Activated CD8-positive, alpha-beta T cell treated with anti-CD3 and anti-CD28 coated beads for 36 hours (primary cell): ENCODE measurements at regions of chr11 and their contacts with region 1.

Region 1: DNA sequence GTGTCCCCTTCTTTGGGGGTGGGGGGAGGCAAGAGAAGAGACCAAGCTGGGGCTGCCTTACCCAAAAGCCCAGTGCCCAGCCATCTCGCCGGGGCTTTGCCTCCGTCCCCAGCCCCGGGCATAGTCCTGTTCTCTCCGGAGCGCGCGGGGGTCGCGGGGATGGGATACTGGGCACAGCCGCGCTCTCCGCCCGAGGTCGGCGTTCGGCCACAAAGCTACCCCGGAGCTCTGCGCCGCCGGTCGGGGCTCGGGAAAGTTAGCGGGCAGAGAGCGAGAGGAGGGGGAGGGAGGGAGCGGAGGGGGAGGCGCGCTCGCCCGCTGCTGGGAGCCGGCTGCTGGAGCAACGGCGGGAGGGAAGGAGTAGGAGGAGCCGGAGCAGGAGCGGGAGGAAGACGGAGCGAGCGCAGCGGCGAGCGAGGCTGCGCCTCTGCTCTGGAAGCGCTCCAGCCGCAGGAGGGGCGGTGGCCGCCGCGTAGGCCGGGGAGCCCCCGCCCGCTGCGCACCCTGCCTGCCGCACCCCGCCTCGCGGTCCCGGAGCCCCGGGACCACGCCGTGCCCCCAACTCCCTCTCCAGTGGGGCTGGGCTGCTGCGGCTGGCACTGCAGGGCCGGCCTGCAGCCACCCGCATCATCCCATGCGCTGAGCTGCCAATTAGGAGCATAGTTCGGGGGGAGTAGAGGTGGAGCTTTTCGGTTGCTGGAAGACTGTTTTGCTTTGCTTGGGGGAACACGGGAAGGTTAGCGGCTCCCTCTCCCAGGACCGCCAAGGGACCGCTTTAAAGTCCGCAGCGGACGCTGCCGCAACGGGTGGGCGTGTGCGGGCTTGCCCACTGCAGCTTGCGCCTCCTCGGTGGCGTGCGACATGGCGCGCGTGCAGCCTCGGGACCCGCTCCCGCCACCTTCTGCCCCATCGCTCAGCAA is at the start of gene SCN4B:
- DNase-seq: no peak
- ATAC-seq: peak; percentile 34
- H3K4me3 Mint-ChIP-seq: peak within 1 kb of the TSS; percentile 57
- H3K27ac Mint-ChIP-seq: no peak within 1 kb of the TSS
- H3K4me1 Mint-ChIP-seq: peaks cover 4% of the 10 kb centered on the region
- H3K27me3 Mint-ChIP-seq: peaks cover 55% of the 10 kb centered on the region
- CTCF ChIP-seq: no peak
- total RNA-seq, gene SCN4B: 0.72 to 1.1 TPM

Region 2: GRCh38 chr11:118180300-118180703 is 27.5 kb after region 1 on chr11:
- CTCF ChIA-PET with region 1: interaction called, 10 read pairs
- POLR2A ChIA-PET with region 1: interaction called, 3 read pairs
- intact Hi-C with region 1: no loop called
- DNase-seq: peak; percentile 35
- ATAC-seq: peak; percentile 60
- H3K4me3 Mint-ChIP-seq: no peak overlapping the region
- H3K27ac Mint-ChIP-seq: no peak overlapping the region
- H3K4me1 Mint-ChIP-seq: peaks cover 5% of the 10 kb centered on the region
- H3K27me3 Mint-ChIP-seq: peaks cover 11% of the 10 kb centered on the region
- CTCF ChIP-seq: no peak

Region 3: GRCh38 chr11:118328745-118329144 is 175.9 kb after region 1 on chr11:
- CTCF ChIA-PET with region 1: no interaction called
- POLR2A ChIA-PET with region 1: no interaction called
- intact Hi-C with region 1: no loop called
- DNase-seq: no peak
- ATAC-seq: no peak
- H3K4me3 Mint-ChIP-seq: no peak overlapping the region
- H3K27ac Mint-ChIP-seq: peak overlapping the region; percentile 10
- H3K4me1 Mint-ChIP-seq: peaks cover 22% of the 10 kb centered on the region
- H3K27me3 Mint-ChIP-seq: no peaks in the 10 kb centered on the region
- CTCF ChIP-seq: no peak